ENCODE measurements at regions of chr15 and their contacts with region 1.

Region 1: GRCh38 chr15:91852741-91853510 is 582 bp upstream of the SLCO3A1 start:
- DNase-seq: peak; percentile 66
- H3K4me3 Mint-ChIP-seq: peak overlapping the region; percentile 75
- H3K27ac Mint-ChIP-seq: peak overlapping the region; percentile 61
- H3K4me1 Mint-ChIP-seq: peaks cover 42% of the 10 kb centered on the region
- H3K27me3 Mint-ChIP-seq: no peaks in the 10 kb centered on the region
- CTCF ChIP-seq: peak; percentile 78

Region 2: DNA sequence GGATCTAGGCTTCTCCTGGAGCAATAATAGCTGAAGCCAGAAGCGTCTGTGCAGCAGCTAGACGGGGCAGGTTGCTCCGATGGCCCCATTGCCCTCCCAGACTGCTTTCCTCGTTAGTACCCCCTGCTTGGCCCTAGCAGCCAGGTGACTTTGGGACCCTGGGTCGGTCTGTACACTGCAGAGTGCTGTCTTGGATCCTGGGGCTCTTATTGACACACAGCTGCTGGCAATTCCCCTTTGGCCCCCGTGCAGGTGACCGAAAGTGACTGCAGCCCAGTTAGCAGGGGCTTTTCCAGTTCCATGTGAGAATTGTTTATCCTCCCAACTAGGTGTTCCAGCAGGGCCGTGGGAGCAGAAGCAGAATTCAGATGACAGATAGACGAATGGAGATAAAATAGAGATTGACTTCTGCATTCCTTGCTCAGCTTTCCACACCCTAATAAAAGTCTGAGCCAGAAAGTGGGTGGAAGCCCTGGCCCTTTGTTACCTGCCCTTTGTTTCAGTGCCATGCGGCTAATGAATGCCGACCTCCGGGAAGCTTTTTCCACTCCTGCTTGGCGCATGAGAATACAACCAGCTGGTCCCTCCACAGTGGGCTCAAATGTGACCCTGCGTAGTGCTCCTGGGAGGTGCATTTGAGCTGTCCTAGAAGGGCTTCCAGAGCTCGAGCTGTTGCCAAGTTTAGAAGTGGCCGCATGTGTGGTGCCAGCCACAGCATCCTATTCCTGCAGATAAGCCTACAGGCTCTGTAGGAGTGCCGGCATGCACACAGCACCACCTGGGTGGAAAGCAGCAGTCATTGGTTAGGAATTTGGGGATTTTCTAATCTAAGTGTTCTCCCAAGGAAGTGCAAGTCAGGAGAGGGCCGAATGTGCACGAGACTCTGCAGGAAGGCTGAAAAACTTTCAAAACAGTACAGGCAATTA is 95.0 kb after region 1 on chr15:
- CTCF ChIA-PET with region 1: interaction called, 152 read pairs
- POLR2A ChIA-PET with region 1: interaction called, 35 read pairs
- intact Hi-C with region 1: no loop called
- DNase-seq: peak; percentile 74
- H3K4me3 Mint-ChIP-seq: peak overlapping the region; percentile 49
- H3K27ac Mint-ChIP-seq: peak overlapping the region; percentile 90
- H3K4me1 Mint-ChIP-seq: peaks cover 72% of the 10 kb centered on the region
- H3K27me3 Mint-ChIP-seq: no peaks in the 10 kb centered on the region
- CTCF ChIP-seq: no peak

Region 3: DNA sequence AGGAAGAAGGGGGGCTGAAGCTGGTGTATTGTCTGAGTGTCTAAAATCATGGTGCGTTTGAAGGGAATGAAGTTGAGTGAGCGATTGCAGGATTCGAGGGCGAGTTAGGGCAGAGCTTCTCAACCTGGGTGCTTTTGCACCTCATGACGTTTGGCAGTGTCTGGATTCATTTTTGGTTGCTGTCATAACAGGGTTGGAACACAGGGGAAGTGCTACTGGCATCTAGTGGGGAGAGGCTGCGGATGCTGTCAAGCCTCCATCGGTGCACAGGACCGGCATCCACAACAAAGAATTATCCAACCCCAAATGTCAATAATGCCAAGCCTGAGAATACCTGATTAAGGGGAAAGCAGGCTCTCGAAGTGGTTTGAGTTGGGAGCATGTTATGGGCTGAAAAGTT is 120.6 kb after region 1 on chr15:
- CTCF ChIA-PET with region 1: interaction called, 36 read pairs
- POLR2A ChIA-PET with region 1: interaction called, 3 read pairs
- intact Hi-C with region 1: loop called (anchors 2 kb)
- DNase-seq: peak; percentile 67
- H3K4me3 Mint-ChIP-seq: no peak overlapping the region
- H3K27ac Mint-ChIP-seq: no peak overlapping the region
- H3K4me1 Mint-ChIP-seq: peaks cover 41% of the 10 kb centered on the region
- H3K27me3 Mint-ChIP-seq: no peaks in the 10 kb centered on the region
- CTCF ChIP-seq: peak; percentile 32

Region 4: GRCh38 chr15:91981821-91982801 is 129.2 kb after region 1 on chr15:
- CTCF ChIA-PET with region 1: interaction called, 36 read pairs
- POLR2A ChIA-PET with region 1: interaction called, 6 read pairs
- intact Hi-C with region 1: loop called (anchors 1 kb)
- DNase-seq: peak; percentile 13
- H3K4me3 Mint-ChIP-seq: no peak overlapping the region
- H3K27ac Mint-ChIP-seq: no peak overlapping the region
- H3K4me1 Mint-ChIP-seq: peaks cover 6% of the 10 kb centered on the region
- H3K27me3 Mint-ChIP-seq: no peaks in the 10 kb centered on the region
- CTCF ChIP-seq: peak; percentile 21